ENCODE measurements at regions of chr6 and their contacts with region 1.

Region 1: GRCh38 chr6:90375681-90376439 is 79.2 kb upstream of the BACH2 start:
- DNase-seq: peak; percentile 82
- H3K4me3 ChIP-seq: 0 out of 2 replicates have a peak overlapping the region, but pooled peaks have one; percentile 8
- H3K27ac ChIP-seq: peak overlapping the region; percentile 53
- H3K4me1 ChIP-seq: peaks cover 13% of the 10 kb centered on the region
- H3K27me3 ChIP-seq: 0 out of 2 replicates have a peak, but pooled peaks cover 8% of the 10 kb centered on the region

Region 2: DNA sequence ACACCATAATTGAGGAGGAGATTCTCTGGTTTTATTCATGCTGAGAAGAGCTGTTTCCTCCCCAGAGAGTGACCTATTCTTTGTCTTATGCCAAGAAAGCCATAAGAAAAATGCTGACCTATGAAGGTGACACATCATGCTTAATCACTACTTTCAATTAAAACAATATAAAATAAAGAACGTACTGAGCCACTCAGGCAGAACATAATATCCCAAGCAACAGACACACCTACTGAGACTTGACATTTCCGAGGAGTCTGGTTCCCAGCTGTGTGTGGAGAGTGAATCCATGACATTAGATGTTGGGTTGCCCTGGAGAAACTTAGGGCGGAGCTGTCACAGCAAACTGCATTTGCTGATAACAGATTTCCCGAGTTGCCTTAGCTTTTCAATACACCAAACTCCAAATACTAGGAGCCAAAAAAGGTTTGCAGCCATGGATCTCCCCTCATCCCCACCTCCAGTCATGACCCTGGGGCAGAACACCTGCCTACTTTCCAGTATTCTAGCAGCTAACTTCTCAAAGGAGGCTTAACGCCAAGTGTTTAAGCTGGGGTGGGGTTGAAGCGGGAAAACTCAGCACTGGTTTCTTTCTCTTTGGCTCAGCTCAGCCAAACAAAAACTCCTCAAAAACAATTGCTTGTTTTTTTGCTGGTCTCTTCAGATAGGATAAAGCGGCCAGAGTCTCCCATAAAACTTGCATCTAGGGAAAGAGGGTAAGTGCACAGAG is 171.4 kb before region 1 on chr6:
- in situ Hi-C with region 1: loop called (anchors 10 kb)
- DNase-seq: peak; percentile 64
- H3K4me3 ChIP-seq: no peak overlapping the region
- H3K27ac ChIP-seq: no peak overlapping the region
- H3K4me1 ChIP-seq: peaks cover 10% of the 10 kb centered on the region
- H3K27me3 ChIP-seq: peaks cover 36% of the 10 kb centered on the region

Region 3: DNA sequence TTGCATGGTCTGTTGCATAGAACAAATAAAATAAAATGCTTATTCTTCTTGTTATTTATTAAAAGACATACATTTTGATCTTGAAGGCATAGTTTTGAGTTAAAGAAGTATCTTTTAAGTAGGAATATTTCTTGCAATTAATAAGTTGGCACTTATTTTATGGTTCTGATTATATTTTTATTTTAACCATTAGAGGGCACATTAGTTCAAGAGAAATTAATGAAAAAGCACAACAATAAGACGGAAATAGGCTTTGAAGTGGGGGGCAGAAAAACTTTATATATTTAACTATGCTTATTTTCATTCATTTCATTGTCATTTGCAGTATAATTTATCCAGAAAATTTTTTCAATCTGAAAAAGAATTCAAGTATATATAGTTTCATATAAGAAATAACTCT is 255.2 kb after region 1 on chr6:
- in situ Hi-C with region 1: no loop called
- DNase-seq: no peak
- H3K4me3 ChIP-seq: no peak overlapping the region
- H3K27ac ChIP-seq: no peak overlapping the region
- H3K4me1 ChIP-seq: no peaks in the 10 kb centered on the region
- H3K27me3 ChIP-seq: no peaks in the 10 kb centered on the region

Region 4: DNA sequence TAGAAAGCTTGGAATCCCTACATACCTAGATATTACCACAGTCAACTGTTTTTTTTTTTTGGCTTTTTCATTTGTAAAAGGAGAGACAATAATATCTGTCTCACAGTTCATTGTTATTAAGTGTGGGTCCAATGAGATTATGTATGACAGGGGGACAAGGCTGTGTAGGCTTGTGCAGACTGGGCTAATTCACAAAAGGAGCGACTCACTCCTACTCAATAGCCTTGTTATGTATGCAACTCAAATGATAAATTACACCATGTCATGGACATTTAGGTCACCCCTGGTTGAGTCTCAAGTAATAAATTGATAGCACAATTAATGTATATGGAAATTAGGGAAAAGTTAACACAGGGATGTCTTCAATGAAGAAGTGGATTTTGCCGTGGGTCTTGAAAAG is 419.2 kb after region 1 on chr6:
- in situ Hi-C with region 1: no loop called
- DNase-seq: no peak
- H3K4me3 ChIP-seq: no peak overlapping the region
- H3K27ac ChIP-seq: no peak overlapping the region
- H3K4me1 ChIP-seq: peaks cover 12% of the 10 kb centered on the region
- H3K27me3 ChIP-seq: no peaks in the 10 kb centered on the region